HepG2 (cell line): ENCODE measurements at regions of chr5 and their contacts with region 1.

Region 1: DNA sequence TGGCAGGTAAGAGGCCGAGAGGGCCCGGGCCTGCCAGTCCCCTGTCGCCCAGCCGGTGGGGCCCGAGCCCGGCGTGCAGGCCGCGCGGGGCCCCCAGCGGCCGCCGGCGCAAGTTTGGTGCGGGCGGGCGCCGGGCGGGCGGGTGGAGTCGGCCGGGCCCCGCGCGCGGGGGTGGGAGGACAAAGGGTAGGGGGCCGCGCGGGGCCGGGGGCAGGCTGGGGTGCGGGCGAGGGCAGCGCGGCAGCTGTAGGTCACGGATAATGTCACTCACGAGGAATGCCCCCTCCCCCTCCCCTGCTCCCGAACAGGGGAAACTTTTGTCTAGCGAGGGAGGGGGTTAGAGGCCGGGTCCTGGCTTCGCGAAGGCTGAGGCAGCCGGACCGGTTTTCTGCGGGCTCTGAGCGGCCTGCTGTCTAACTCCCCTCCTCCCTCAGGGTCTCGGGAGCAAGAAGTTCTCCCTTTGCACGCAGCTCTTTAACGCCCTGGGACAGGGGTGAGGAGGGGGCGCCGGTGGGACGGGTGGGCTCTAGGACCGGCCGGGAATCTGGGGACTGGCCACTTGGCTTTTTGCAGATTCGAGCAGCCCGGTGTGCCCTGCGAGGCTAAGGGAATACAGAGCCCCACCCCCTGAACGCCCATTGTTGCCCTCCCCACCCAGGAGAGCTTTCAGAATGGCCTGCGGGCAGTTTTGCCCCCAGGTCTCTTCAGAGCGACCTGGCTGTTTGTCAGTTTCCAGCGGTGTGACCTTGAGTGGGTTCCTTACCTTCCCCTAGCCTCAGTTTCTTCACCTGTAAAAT is 21.3 kb upstream of the NDST1 start:
- DNase-seq: peak; percentile 71
- ATAC-seq: peak; percentile 39
- H3K4me3 ChIP-seq: peak overlapping the region; percentile 88 to 94 (median 91)
- H3K27ac ChIP-seq: peak overlapping the region; percentile 96
- H3K4me1 ChIP-seq: peaks cover 81% of the 10 kb centered on the region
- H3K27me3 ChIP-seq: peaks cover 2 to 8% of the 10 kb centered on the region in 2 experiments; a peak in 2 of 5 replicates
- CTCF ChIP-seq: peak; percentile 22
- EP300 ChIP-seq: no peak
- POLR2A ChIP-seq: peak; percentile 20 to 34; a peak in 1 of 4 replicates
- RAD21 ChIP-seq: peak; percentile 39; the same call in 1 of the 2 replicates

Region 2: GRCh38 chr5:150511578-150512367 is 25.2 kb after region 1 on chr5:
- CTCF ChIA-PET with region 1: interaction called, 3 read pairs
- POLR2A ChIA-PET with region 1: interaction called, 23 read pairs
- in situ Hi-C with region 1: no loop called
- intact Hi-C with region 1: no loop called
- DNase-seq: no peak
- ATAC-seq: no peak
- H3K4me3 ChIP-seq: peak overlapping the region in 1 of 3 experiments; percentile 12; a peak in 1 of 6 replicates
- H3K27ac ChIP-seq: peak overlapping the region; percentile 77
- H3K4me1 ChIP-seq: peaks cover 98% of the 10 kb centered on the region
- H3K27me3 ChIP-seq: no peaks in the 10 kb centered on the region
- CTCF ChIP-seq: no peak
- EP300 ChIP-seq: no peak
- POLR2A ChIP-seq: no peak
- RAD21 ChIP-seq: no peak

Region 3: DNA sequence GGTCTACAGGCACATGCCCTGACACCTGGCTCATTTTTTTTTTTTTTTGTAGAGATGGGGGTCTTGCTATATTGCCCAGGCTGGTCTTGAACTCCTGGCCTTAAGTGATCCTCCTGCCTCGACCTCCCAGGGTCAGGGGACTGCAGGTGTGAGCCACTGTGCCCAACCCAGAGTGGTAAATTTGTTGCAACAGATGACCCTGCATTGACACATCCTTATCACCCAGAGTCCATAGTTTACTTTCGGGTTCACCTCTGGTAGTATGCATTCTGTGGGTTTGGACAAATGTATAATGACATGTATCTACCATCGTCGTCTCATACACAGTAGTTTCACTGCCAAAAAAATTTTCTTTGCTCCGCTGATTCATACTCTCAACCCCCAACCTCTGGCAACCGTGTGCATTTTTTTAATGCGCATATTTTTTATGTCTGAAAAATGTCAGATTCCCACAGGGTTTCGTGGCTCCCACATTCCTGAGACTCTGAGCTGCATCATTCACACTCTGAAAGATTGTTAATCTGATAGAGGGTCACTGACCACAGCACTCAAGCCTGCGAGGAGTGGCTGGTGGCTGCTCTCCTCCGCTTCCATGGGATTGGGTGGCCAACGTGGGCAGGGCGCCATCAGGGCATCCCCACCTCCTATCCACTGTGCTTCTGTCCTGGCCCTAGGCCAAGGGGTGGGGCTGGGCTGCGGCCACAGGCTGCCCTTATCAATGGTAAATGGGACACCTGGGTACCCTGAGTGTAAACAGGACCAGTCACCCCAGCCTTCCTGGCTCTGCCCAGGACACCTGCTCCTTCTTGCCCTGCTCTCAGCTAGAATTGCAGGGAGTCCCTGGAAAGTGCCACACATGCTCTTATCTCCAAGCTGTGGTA is 30.9 kb after region 1 on chr5:
- CTCF ChIA-PET with region 1: interaction called, 10 read pairs
- POLR2A ChIA-PET with region 1: interaction called, 39 read pairs
- in situ Hi-C with region 1: loop called (anchors 5 kb)
- intact Hi-C with region 1: loop called (anchors 1 kb)
- DNase-seq: peak; percentile 81
- ATAC-seq: peak; percentile 61
- H3K4me3 ChIP-seq: peak overlapping the region in 1 of 3 experiments; percentile 40; a peak in 1 of 6 replicates
- H3K27ac ChIP-seq: peak overlapping the region; percentile 72
- H3K4me1 ChIP-seq: peaks cover 98% of the 10 kb centered on the region
- H3K27me3 ChIP-seq: no peaks in the 10 kb centered on the region
- CTCF ChIP-seq: no peak
- EP300 ChIP-seq: peak; percentile 39 to 83; a peak in 2 of 4 replicates
- POLR2A ChIP-seq: no peak
- RAD21 ChIP-seq: no peak